ENCODE measurements at regions of chr19 and their contacts with region 1.

Region 1: DNA sequence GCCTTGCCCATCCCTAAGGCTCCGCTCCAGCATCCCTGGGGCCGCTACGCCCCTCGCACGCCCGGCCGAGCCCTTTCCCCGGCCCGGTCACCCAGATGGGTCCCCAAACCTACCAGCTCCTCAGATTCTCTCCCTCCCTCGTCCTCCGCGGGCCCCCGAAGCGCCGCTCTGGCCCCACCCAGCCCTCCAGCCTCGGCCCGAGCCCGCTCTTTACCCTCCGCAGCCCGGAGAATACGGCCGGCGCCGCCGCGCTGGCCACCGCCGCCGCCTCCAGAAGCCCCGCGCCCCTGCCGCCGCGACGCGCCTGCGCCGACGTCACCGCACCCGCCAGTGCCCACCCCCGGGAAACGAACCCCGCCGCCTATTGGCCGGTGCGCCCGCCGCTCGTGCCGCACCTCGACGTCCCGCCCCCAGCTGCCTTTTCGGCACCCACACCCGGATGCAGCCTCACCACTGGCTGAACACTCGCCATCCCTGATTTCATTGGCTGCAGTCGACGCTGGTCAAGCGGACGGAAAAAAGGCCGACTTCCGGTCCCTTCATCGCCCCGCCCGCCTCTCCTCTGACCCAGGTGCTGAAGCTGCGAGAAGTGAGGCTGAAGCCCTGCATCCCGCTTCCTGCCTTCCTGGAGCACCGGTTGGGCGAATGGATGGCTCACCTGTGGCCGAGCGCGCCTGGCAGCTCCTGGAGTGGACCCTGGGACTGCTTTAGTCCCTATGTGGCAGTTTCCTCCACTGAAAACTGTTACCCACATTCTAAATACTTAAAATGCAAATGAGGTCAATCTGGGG is at the start of gene DAPK3:
- DNase-seq: peak; percentile 98 to 99 (median 99)
- ATAC-seq: peak; percentile 78 to 91 (median 82)
- H3K4me3 ChIP-seq: peak within 1 kb of the TSS; percentile 61 to 100 (median 93)
- H3K27ac ChIP-seq: peak within 1 kb of the TSS; percentile 84 to 100 (median 98)
- H3K4me1 ChIP-seq: peaks cover 17 to 49% (median 43%) of the 10 kb centered on the region in 12 donors
- H3K27me3 ChIP-seq: no peaks in the 10 kb centered on the region
- CTCF ChIP-seq: peak in 4 of 12 donors; percentile 10 to 38 (median 26)
- POLR2A ChIP-seq: peak; percentile 96 to 97
- total RNA-seq, gene DAPK3: 70.6 to 200 (median 97.4) TPM

Region 2: GRCh38 chr19:3932931-3933810 is 37.8 kb before region 1 on chr19 and contains the start of gene NMRK2:
- intact Hi-C with region 1: loop called in 3 of 10 experiments (anchors 2 to 5 kb)
- DNase-seq: peak; percentile 69 to 89 (median 76)
- ATAC-seq: peak; percentile 57 to 81 (median 73)
- H3K4me3 ChIP-seq: peak within 1 kb of the TSS; percentile 32 to 81 (median 56)
- H3K27ac ChIP-seq: peak within 1 kb of the TSS; percentile 64 to 98 (median 90)
- H3K4me1 ChIP-seq: peaks cover 0 to 24% (median 3%) of the 10 kb centered on the region in 12 donors
- H3K27me3 ChIP-seq: peaks cover 0 to 25% (median 0%) of the 10 kb centered on the region in 9 donors
- CTCF ChIP-seq: no peak
- POLR2A ChIP-seq: peak in 1 of 2 donors; percentile 80
- total RNA-seq, gene NMRK2: 347 to 2,001 (median 606) TPM

Region 3: GRCh38 chr19:3950871-3951861 is 19.8 kb before region 1 on chr19:
- intact Hi-C with region 1: loop called in 1 of 10 experiments (anchors 2 kb)
- DNase-seq: peak; percentile 78 to 89 (median 79)
- ATAC-seq: peak; percentile 65 to 81 (median 79)
- H3K4me3 ChIP-seq: peak overlapping the region; percentile 1 to 68 (median 58)
- H3K27ac ChIP-seq: peak overlapping the region; percentile 84 to 100 (median 94)
- H3K4me1 ChIP-seq: peaks cover 0 to 53% (median 19%) of the 10 kb centered on the region in 12 donors
- H3K27me3 ChIP-seq: no peaks in the 10 kb centered on the region
- CTCF ChIP-seq: no peak
- POLR2A ChIP-seq: peak in 1 of 2 donors; percentile 71

Region 4: DNA sequence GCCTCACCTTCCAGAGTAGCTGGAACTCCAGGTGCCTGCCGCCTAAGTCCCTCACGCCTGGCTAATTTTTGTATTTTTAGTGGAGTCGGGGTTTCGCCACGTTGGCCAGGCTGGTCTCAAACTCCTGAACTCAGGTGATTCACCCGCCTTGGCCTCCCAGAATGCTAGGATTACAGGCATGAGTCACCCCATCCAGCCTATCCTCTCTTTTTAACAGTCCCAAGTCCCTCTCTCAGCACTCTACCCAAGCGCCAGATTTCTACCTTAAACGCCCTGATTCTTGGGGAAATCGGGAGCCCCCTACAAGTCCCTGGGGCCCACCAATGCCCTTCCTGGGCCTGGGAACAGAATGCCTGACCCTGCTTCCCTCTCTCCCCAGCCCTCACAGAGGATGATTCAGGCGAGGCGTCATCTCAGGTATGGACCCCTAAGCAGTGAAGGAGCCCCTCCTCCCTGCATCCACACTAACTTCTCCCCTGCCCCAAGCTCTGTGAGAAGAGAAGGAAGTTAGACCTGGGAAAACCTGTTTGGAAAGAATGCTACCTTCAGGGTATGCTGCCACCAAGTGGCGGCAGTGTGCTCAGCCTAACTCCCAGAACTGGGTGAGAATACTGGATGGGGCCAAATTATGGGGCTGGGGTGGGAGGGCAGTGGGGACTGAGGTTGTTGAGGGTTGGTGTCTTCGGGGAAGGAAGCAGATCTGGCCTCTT is 237.5 kb after region 1 on chr19:
- intact Hi-C with region 1: no loop called
- DNase-seq: no peak
- ATAC-seq: no peak
- H3K4me3 ChIP-seq: no peak overlapping the region
- H3K27ac ChIP-seq: no peak overlapping the region
- H3K4me1 ChIP-seq: peaks cover 0 to 8% (median 0%) of the 10 kb centered on the region in 12 donors
- H3K27me3 ChIP-seq: peaks cover 0 to 11% (median 0%) of the 10 kb centered on the region in 9 donors
- CTCF ChIP-seq: peak in 7 of 12 donors; percentile 4 to 39 (median 19)
- POLR2A ChIP-seq: no peak

Measured in heart left ventricle (tissue), 16 donors.